MCF 10A (cell line): ENCODE measurements at regions of chr2 and their contacts with region 1.

Region 1: DNA sequence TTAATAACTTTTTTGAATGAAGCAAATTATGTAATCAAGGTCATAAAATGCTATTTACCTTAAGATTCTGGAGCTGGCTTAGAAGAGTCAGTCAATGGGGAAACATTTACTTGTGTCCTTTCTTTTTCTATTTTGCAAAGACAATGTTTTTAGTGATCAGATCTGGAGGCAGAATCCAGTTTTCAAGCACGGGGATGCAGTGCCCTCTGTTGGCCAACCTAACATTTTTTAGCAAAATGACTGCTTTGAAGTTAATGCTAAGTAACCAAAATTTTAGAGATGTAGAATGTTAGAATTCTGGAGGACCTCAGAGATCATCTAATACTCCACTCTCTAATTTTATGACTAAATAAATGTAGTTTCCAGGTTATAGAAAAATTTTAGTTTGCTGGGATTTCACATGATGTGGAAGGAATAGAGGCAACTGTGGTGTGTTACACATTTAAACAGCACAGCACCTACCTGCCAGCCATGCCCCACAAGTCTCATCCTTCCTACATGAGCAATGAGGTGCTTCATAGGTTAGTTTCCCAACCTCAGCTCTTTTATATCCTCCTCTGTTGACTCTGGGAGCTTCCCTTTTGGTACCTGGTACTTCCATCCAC is 23.6 kb upstream of the SLC9A4 start:
- DNase-seq: peak; percentile 49
- H3K4me3 Mint-ChIP-seq: no peak overlapping the region
- H3K27ac Mint-ChIP-seq: no peak overlapping the region
- H3K4me1 Mint-ChIP-seq: no peaks in the 10 kb centered on the region
- H3K27me3 Mint-ChIP-seq: no peaks in the 10 kb centered on the region
- CTCF ChIP-seq: peak; percentile 64

Region 2: GRCh38 chr2:102187496-102188150 is 261.8 kb before region 1 on chr2:
- CTCF ChIA-PET with region 1: no interaction called
- POLR2A ChIA-PET with region 1: no interaction called
- intact Hi-C with region 1: loop called (anchors 5 kb)
- DNase-seq: no peak
- H3K4me3 Mint-ChIP-seq: no peak overlapping the region
- H3K27ac Mint-ChIP-seq: no peak overlapping the region
- H3K4me1 Mint-ChIP-seq: peaks cover 5% of the 10 kb centered on the region
- H3K27me3 Mint-ChIP-seq: no peaks in the 10 kb centered on the region
- CTCF ChIP-seq: no peak

Region 3: GRCh38 chr2:102251042-102251848 is 198.2 kb before region 1 on chr2:
- CTCF ChIA-PET with region 1: interaction called, 31 read pairs
- POLR2A ChIA-PET with region 1: no interaction called
- intact Hi-C with region 1: no loop called
- DNase-seq: no peak
- H3K4me3 Mint-ChIP-seq: no peak overlapping the region
- H3K27ac Mint-ChIP-seq: no peak overlapping the region
- H3K4me1 Mint-ChIP-seq: peaks cover 16% of the 10 kb centered on the region
- H3K27me3 Mint-ChIP-seq: no peaks in the 10 kb centered on the region
- CTCF ChIP-seq: no peak

Region 4: GRCh38 chr2:102355526-102356380 is 93.7 kb before region 1 on chr2 and contains the start of gene IL18R1:
- CTCF ChIA-PET with region 1: interaction called, 27 read pairs
- POLR2A ChIA-PET with region 1: no interaction called
- intact Hi-C with region 1: no loop called
- DNase-seq: peak; percentile 71
- H3K4me3 Mint-ChIP-seq: peak within 1 kb of the TSS; percentile 87
- H3K27ac Mint-ChIP-seq: peak within 1 kb of the TSS; percentile 68
- H3K4me1 Mint-ChIP-seq: peaks cover 19% of the 10 kb centered on the region
- H3K27me3 Mint-ChIP-seq: no peaks in the 10 kb centered on the region
- CTCF ChIP-seq: peak; percentile 85
- total RNA-seq, gene IL18R1: 3.5 and 6.7 TPM in 2 replicates